Mammary epithelial cell (primary cell): ENCODE measurements at regions of chr16 and their contacts with region 1.

Region 1: GRCh38 chr16:89700100-89700648 is 1.3 kb downstream of the SPATA2L start:
- DNase-seq: peak; percentile 98
- H3K4me3 ChIP-seq: peak overlapping the region; percentile 7 to 92 (median 72)
- H3K27ac ChIP-seq: peak overlapping the region; percentile 26
- H3K4me1 ChIP-seq: peaks cover 16% of the 10 kb centered on the region
- H3K27me3 ChIP-seq: no peaks in the 10 kb centered on the region
- CTCF ChIP-seq: peak; percentile 44 to 89

Region 2: DNA sequence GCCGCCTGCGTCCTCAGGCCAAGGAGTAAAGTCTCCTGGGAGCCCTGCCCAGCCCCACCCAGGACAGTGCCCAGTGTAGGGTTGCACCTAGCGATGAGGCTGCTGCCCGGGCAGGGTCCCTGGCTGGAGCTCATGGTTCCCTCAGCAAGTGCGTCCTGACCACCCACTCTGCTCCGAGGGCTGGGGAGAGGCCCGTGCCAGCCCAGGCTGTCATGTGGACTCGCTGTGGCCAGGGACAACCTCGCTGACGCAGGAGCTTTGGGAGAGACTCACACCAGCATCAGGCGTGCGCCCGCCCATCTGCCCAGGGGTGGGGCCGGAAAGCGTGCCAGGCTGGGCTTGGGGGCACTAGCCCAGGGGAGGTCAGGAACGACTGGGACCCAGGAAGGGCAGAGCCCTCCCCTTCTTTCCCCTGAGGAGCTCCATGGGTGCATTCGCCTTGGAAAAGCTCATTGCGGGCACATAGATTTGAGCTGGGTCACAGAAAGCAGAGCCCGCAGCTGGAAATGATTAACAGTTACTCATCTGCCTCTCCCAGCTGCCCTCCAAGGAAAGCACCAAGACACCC is 67.0 kb before region 1 on chr16:
- CTCF ChIA-PET with region 1: interaction called, 13 read pairs
- dilution Hi-C with region 1: no loop called
- in situ Hi-C with region 1: no loop called
- intact Hi-C with region 1: no loop called
- DNase-seq: peak; percentile 85
- H3K4me3 ChIP-seq: no peak overlapping the region
- H3K27ac ChIP-seq: no peak overlapping the region
- H3K4me1 ChIP-seq: peaks cover 16% of the 10 kb centered on the region
- H3K27me3 ChIP-seq: peaks cover 1% of the 10 kb centered on the region
- CTCF ChIP-seq: no peak

Region 3: DNA sequence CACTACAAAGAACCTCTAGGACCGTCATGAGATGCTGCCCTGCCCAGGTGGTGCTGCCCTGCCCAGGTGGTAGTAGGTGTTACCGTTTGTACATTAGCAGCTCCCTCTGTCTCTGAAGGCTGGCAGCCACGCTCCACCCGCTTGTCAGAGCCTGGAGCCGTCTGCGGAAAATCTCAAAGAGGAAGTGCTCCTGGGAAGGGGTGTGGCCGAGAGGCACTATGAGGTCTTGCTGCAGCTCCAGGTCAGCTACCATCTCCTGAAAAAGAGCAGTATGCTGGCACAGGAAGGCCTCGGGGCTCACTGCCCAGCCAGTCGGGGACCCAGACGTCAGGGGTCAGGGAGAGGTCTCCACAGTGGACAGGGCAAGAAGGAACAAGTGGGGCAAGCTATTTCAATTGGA is 49.5 kb after region 1 on chr16:
- CTCF ChIA-PET with region 1: interaction called, 10 read pairs
- dilution Hi-C with region 1: no loop called
- in situ Hi-C with region 1: no loop called
- intact Hi-C with region 1: no loop called
- DNase-seq: peak; percentile 8
- H3K4me3 ChIP-seq: no peak overlapping the region
- H3K27ac ChIP-seq: no peak overlapping the region
- H3K4me1 ChIP-seq: no peaks in the 10 kb centered on the region
- H3K27me3 ChIP-seq: no peaks in the 10 kb centered on the region
- CTCF ChIP-seq: no peak

Region 4: DNA sequence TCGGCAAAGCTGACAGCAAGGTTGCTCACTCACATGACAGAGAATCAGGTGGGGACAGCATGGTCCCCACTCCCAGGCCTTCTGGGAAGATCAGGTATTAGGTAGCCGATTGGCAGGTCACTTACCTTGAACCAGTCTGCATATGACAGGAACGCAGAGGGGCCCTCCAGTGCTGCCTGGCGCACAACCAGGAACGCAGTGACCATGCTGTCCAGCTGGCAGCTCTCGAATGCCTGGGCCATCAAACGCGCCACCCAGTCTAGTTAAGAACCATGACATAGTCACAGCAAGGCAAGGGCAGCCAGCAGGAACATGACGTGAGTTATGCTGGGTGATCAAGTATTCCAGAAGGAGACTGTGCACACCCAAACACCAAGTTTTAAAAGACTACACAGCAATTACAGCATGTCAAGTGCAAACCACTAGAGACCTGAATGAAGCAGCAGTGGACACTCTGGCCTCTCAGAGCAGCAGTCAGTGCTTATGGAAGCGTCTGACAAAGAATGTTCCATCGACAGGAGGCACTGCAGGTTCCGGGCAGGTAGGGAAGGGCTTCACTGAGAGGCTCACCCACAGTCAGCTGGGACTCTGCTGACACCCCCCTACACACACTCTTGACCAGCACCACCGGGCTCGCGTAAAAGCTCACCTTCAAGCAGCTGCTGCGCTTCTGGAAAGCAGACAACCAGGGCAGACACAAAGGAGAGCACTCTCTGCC is 91.3 kb after region 1 on chr16:
- CTCF ChIA-PET with region 1: interaction called, 3 read pairs
- dilution Hi-C with region 1: no loop called
- in situ Hi-C with region 1: no loop called
- intact Hi-C with region 1: loop called (anchors 1 kb)
- DNase-seq: no peak
- H3K4me3 ChIP-seq: no peak overlapping the region
- H3K27ac ChIP-seq: no peak overlapping the region
- H3K4me1 ChIP-seq: no peaks in the 10 kb centered on the region
- H3K27me3 ChIP-seq: no peaks in the 10 kb centered on the region
- CTCF ChIP-seq: no peak

Region 5: GRCh38 chr16:89922884-89923690 is 222.9 kb after region 1 on chr16 and contains the start of gene TUBB3:
- CTCF ChIA-PET with region 1: no interaction called
- dilution Hi-C with region 1: no loop called
- in situ Hi-C with region 1: no loop called
- intact Hi-C with region 1: loop called (anchors 5 kb)
- DNase-seq: peak; percentile 72
- H3K4me3 ChIP-seq: peak within 1 kb of the TSS; percentile 59 to 73 (median 69)
- H3K27ac ChIP-seq: peak within 1 kb of the TSS; percentile 67
- H3K4me1 ChIP-seq: peaks cover 57% of the 10 kb centered on the region
- H3K27me3 ChIP-seq: no peaks in the 10 kb centered on the region
- CTCF ChIP-seq: no peak
- total RNA-seq, gene TUBB3: 99.5 to 103 TPM

Region 6: GRCh38 chr16:90022209-90023064 is 322.3 kb after region 1 on chr16:
- CTCF ChIA-PET with region 1: interaction called, 8 read pairs
- dilution Hi-C with region 1: no loop called
- in situ Hi-C with region 1: no loop called
- intact Hi-C with region 1: loop called (anchors 10 kb)
- DNase-seq: peak; percentile 83
- H3K4me3 ChIP-seq: peak overlapping the region; percentile 68 to 81 (median 81)
- H3K27ac ChIP-seq: peak overlapping the region; percentile 63
- H3K4me1 ChIP-seq: peaks cover 33% of the 10 kb centered on the region
- H3K27me3 ChIP-seq: no peaks in the 10 kb centered on the region
- CTCF ChIP-seq: peak in 1 of 2 donors; percentile 3